Heart left ventricle (tissue), 16 donors: ENCODE measurements at regions of chr11 and their contacts with region 1.

Region 1: GRCh38 chr11:44927174-44927661 is 23.5 kb downstream of the TP53I11 start:
- DNase-seq: peak in 4 of 5 donors; percentile 61 to 83 (median 64)
- ATAC-seq: peak; percentile 24 to 57 (median 40)
- H3K4me3 ChIP-seq: no peak overlapping the region
- H3K27ac ChIP-seq: no peak overlapping the region
- H3K4me1 ChIP-seq: peaks cover 0 to 24% (median 9%) of the 10 kb centered on the region in 12 donors
- H3K27me3 ChIP-seq: no peaks in the 10 kb centered on the region
- CTCF ChIP-seq: peak; percentile 77 to 91 (median 86)
- POLR2A ChIP-seq: no peak

Region 2: GRCh38 chr11:44823006-44823405 is 104.2 kb before region 1 on chr11:
- intact Hi-C with region 1: no loop called
- DNase-seq: no peak
- ATAC-seq: no peak
- H3K4me3 ChIP-seq: no peak overlapping the region
- H3K27ac ChIP-seq: no peak overlapping the region
- H3K4me1 ChIP-seq: peaks cover 0 to 78% (median 39%) of the 10 kb centered on the region in 12 donors
- H3K27me3 ChIP-seq: no peaks in the 10 kb centered on the region
- CTCF ChIP-seq: peak in 4 of 12 donors; percentile 7 to 30 (median 18)
- POLR2A ChIP-seq: no peak

Region 3: DNA sequence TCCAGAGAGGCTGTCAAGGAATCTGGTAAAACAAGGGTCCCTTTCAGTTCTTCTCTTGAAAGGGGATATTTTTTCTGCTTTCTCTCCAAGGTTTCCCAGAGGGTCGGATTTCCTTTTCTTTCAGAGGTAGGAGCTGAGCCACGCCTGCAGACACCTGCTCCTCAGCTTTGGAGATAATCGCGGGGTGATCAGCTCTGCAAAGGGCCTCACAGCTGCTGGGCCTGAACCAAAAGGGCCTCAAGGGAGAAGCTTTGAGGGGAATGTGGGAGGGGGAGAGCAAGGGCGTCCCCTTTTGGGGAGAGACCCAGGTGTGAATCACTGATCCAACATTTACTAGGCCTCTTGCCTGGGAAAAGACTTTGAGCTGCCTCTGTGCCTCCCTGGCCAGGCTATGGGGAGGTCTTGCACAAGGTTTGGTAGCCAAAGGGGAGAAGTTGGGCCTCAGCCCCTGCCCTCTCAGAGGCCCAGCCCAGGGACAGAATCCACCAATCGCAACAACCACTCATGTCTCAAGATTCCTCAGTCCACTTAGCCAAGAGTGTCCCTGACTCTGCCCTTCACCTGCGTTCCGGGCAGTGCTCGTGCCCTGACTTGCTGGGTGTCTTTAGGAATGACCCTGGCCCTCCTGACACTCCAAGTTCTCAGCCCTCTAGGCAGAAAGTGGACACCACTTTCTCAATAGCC is 37.5 kb after region 1 on chr11:
- intact Hi-C with region 1: no loop called
- DNase-seq: no peak
- ATAC-seq: no peak
- H3K4me3 ChIP-seq: no peak overlapping the region
- H3K27ac ChIP-seq: no peak overlapping the region
- H3K4me1 ChIP-seq: no peaks in the 10 kb centered on the region
- H3K27me3 ChIP-seq: no peaks in the 10 kb centered on the region
- CTCF ChIP-seq: no peak
- POLR2A ChIP-seq: no peak

Region 4: DNA sequence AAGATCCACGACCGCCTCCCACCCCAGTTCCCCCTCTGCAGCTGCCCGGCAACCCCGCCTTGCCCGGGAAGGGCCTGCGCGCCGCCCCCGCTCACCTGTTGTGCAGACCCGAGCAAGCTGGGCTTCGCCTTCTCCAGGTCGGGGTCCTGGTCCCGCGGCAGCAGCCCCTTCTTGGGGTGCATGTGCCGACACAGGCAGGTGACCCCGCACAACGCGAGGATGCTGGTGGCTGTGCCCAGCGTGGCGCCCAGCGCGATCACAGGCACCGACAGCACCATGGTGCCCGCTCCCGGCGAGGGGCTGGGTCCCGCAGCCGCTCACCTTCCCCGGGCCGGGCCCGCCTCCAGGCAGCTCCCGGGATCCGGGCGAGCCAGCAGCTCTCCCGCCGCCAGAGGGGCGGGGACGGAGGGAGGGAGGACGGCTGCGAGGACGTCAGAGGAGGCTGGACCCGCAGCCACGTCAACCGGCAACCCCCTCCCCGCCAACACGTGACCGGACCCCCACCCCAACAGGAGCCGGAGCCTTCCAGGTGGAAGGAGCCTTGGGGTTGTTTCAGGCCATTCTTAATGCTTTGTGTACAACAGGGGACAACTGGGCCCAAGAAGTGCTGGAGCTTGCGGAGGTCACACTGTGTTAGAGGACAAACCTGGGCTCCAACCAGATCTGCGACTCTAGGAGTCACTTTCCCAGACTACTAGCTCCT is 358.9 kb after region 1 on chr11 and contains the start of gene SYT13:
- intact Hi-C with region 1: loop called in 6 of 10 experiments (anchors 5 to 10 kb)
- DNase-seq: peak in 2 of 5 donors; percentile 32 to 71
- ATAC-seq: peak in 3 of 4 donors; percentile 71 to 84 (median 80)
- H3K4me3 ChIP-seq: peak within 1 kb of the TSS in 8 of 12 donors; percentile 13 to 37 (median 24)
- H3K27ac ChIP-seq: no peak within 1 kb of the TSS
- H3K4me1 ChIP-seq: peaks cover 0 to 9% (median 0%) of the 10 kb centered on the region in 12 donors
- H3K27me3 ChIP-seq: peaks cover 15 to 82% (median 38%) of the 10 kb centered on the region in 9 donors
- CTCF ChIP-seq: no peak
- POLR2A ChIP-seq: no peak
- total RNA-seq, gene SYT13: 0.61 to 7.5 (median 3.5) TPM

Region 5: DNA sequence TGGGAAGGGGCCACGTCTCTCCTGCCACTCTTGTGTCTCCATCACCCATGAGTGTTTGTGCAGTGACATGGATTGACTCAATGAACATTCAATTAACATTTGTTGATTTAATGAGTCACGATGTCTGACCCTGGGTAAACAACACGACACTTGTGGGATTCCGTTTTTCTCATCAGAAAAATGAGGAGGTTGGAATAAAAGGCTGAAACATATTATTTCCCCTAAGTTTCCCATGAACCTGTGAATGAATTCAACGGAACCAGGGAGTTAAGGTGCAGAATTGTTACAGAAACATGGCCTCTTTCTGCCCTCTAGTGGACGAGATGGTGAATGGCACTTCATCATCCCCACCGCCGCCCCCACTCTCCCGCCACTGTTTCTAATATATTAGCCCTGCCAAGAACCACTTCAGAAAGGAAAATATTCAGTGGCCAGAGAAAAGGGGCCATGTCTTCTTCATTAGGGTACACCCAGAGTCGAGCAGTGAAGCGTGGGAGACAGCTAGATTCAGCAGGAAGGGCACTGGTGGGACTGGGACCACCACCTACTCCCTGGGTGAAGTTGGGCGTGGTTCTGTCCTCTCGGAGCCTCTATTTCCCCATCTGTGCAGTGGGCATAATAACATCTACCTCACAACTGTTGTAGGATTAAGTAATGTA is 405.2 kb after region 1 on chr11:
- intact Hi-C with region 1: loop called in 6 of 10 experiments (anchors 5 to 10 kb)
- DNase-seq: peak in 1 of 5 donors; percentile 38
- ATAC-seq: peak; percentile 57 to 70 (median 69)
- H3K4me3 ChIP-seq: peak overlapping the region in 9 of 12 donors; percentile 1 to 44 (median 35)
- H3K27ac ChIP-seq: peak overlapping the region; percentile 55 to 80 (median 73)
- H3K4me1 ChIP-seq: peaks cover 0 to 22% (median 5%) of the 10 kb centered on the region in 12 donors
- H3K27me3 ChIP-seq: no peaks in the 10 kb centered on the region
- CTCF ChIP-seq: peak; percentile 74 to 93 (median 88)
- POLR2A ChIP-seq: no peak